ENCODE measurements at regions of chr2 and their contacts with region 1.

Region 1: GRCh38 chr2:168166902-168167510 is 80.4 kb downstream of the STK39 start:
- DNase-seq: peak; percentile 88
- ATAC-seq: peak; percentile 91
- H3K4me3 ChIP-seq: no peak overlapping the region; a peak in 1 of 6 replicates
- H3K27ac ChIP-seq: peak overlapping the region; percentile 80
- H3K4me1 ChIP-seq: peaks cover 59% of the 10 kb centered on the region
- H3K27me3 ChIP-seq: no peaks in the 10 kb centered on the region
- CTCF ChIP-seq: no peak
- EP300 ChIP-seq: peak in 1 of 2 experiments; percentile 94; a peak in 2 of 4 replicates
- POLR2A ChIP-seq: no peak
- RAD21 ChIP-seq: no peak

Region 2: DNA sequence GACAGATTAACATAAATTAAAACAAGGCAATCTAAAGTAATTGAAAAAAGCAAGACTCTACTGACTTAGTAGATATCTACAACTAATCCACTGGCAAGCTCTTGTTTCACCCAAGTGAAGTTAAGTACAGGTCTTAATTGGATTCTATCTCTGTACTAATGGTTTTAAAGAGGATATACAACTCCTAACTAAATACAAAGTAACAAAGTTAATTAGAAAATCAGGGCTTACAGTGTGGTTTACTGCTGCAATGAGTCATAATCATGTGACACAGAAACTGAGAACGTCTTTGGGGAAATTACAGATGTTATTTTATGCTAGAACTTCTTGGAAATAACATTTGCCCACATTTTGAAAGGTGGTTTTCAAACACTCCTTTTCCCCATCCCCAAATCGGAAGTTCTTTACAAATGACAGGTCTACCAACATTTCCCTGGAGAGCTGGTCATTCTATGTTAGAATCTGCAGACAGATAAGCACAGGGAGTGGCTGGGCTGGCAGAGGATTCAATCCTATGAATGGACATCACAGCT is 164.9 kb before region 1 on chr2:
- CTCF ChIA-PET with region 1: no interaction called
- POLR2A ChIA-PET with region 1: no interaction called
- in situ Hi-C with region 1: no loop called
- intact Hi-C with region 1: no loop called
- DNase-seq: no peak
- ATAC-seq: no peak
- H3K4me3 ChIP-seq: no peak overlapping the region
- H3K27ac ChIP-seq: no peak overlapping the region
- H3K4me1 ChIP-seq: no peaks in the 10 kb centered on the region
- H3K27me3 ChIP-seq: no peaks in the 10 kb centered on the region
- CTCF ChIP-seq: no peak
- EP300 ChIP-seq: no peak
- POLR2A ChIP-seq: no peak
- RAD21 ChIP-seq: no peak

Region 3: DNA sequence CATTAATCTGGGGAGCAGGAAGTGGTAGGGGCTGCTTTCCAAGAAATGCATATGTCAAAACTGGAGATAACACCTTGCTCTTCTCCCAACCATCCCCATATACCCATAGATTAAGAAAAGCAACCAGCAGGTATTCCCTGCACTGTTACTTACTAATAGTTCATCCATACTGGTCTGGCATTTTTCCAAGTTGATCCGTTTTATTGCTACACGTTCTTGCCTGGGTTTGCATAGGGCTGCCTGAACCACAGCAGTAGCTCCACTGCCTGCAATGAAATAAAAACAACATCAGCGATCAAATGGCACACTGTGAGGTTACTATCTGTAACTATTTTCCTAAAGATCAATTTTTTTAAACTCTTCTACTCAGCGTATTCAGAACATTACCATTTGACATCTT is 14.8 kb after region 1 on chr2:
- CTCF ChIA-PET with region 1: no interaction called
- POLR2A ChIA-PET with region 1: interaction called, 23 read pairs
- in situ Hi-C with region 1: no loop called
- intact Hi-C with region 1: loop called (anchors 1 kb)
- DNase-seq: no peak
- ATAC-seq: no peak
- H3K4me3 ChIP-seq: no peak overlapping the region
- H3K27ac ChIP-seq: peak overlapping the region; percentile 88
- H3K4me1 ChIP-seq: peaks cover 98% of the 10 kb centered on the region
- H3K27me3 ChIP-seq: no peaks in the 10 kb centered on the region
- CTCF ChIP-seq: no peak
- EP300 ChIP-seq: no peak
- POLR2A ChIP-seq: no peak
- RAD21 ChIP-seq: no peak

Region 4: GRCh38 chr2:168194784-168195522 is 27.9 kb after region 1 on chr2:
- CTCF ChIA-PET with region 1: no interaction called
- POLR2A ChIA-PET with region 1: interaction called, 15 read pairs
- in situ Hi-C with region 1: no loop called
- intact Hi-C with region 1: loop called (anchors 1 kb)
- DNase-seq: no peak
- ATAC-seq: no peak
- H3K4me3 ChIP-seq: no peak overlapping the region
- H3K27ac ChIP-seq: no peak overlapping the region
- H3K4me1 ChIP-seq: peaks cover 96% of the 10 kb centered on the region
- H3K27me3 ChIP-seq: no peaks in the 10 kb centered on the region
- CTCF ChIP-seq: no peak
- EP300 ChIP-seq: no peak
- POLR2A ChIP-seq: no peak
- RAD21 ChIP-seq: no peak

Region 5: GRCh38 chr2:168293766-168294165 is 126.8 kb after region 1 on chr2:
- CTCF ChIA-PET with region 1: no interaction called
- POLR2A ChIA-PET with region 1: no interaction called
- in situ Hi-C with region 1: no loop called
- intact Hi-C with region 1: loop called (anchors 5 kb)
- DNase-seq: peak; percentile 23
- ATAC-seq: peak; percentile 87
- H3K4me3 ChIP-seq: no peak overlapping the region
- H3K27ac ChIP-seq: no peak overlapping the region
- H3K4me1 ChIP-seq: no peaks in the 10 kb centered on the region
- H3K27me3 ChIP-seq: no peaks in the 10 kb centered on the region
- CTCF ChIP-seq: peak; percentile 51
- EP300 ChIP-seq: no peak
- POLR2A ChIP-seq: no peak
- RAD21 ChIP-seq: peak; percentile 32; the same call in 1 of the 2 replicates